ENCODE measurements at regions of chr2 and their contacts with region 1.

Region 1: GRCh38 chr2:85132834-85133637 is at the start of gene TCF7L1:
- DNase-seq: peak; percentile 87 to 91
- ATAC-seq: peak; percentile 93 to 96 (median 94)
- H3K4me3 ChIP-seq: peak within 1 kb of the TSS; percentile 85
- H3K27ac ChIP-seq: peak within 1 kb of the TSS; percentile 47
- H3K4me1 ChIP-seq: peaks cover 8% of the 10 kb centered on the region
- H3K27me3 ChIP-seq: no peaks in the 10 kb centered on the region
- CTCF ChIP-seq: peak; percentile 89
- total RNA-seq, gene TCF7L1: 5.3 to 13.3 (median 8.0) TPM

Region 2: DNA sequence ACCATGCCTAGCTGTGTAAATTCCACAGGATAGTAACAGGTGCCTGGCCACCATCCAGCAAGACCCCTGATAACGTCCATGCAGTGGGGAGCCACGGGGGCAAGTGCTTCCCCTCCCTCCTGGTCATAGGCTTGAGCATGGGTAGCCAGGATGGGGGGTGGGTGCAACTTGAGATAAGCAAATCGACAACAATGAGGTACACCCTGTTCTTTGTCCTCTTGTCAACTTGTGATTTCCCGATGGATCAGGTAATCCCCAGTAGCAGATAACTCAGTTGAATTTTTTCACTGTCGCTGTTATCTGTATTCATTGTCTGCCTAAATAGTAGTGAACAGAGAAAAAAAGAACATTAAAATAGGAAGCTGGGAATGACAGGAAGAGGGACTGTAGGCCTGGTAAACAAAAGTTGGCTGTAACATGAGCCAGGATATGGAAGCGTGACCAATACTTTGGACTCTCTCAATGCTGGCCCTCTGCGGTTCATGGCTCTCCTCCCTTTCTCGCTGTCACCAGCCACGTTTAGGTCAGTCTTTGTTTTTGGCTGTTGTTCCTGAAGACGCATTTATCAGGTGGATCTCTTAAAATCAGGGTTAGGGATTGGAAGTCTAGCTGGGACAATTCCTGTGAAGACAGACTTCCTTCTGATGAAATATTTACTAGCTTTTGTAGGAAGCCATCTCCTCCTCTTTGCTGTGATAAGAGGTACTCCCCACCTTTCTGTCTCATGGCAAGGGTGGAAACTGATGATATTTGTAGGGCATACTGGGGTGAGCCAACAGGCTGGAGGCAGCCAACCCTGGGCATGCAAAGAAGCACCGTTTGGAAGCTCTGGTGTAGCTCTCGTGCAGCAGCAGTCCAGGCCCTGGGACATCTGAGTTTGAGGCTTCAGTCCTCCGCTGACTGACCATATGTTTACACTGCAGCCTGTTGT is 42.6 kb after region 1 on chr2:
- intact Hi-C with region 1: loop called (anchors 5 kb)
- DNase-seq: peak; percentile 66 to 68
- ATAC-seq: peak; percentile 85 to 91 (median 87)
- H3K4me3 ChIP-seq: peak overlapping the region; percentile 16
- H3K27ac ChIP-seq: peak overlapping the region; percentile 96
- H3K4me1 ChIP-seq: peaks cover 51% of the 10 kb centered on the region
- H3K27me3 ChIP-seq: no peaks in the 10 kb centered on the region
- CTCF ChIP-seq: no peak

Region 3: GRCh38 chr2:85215448-85216401 is 82.7 kb after region 1 on chr2:
- intact Hi-C with region 1: loop called in 1 of 2 experiments (anchors 2 kb)
- DNase-seq: peak; percentile 39 to 58
- ATAC-seq: no peak
- H3K4me3 ChIP-seq: no peak overlapping the region
- H3K27ac ChIP-seq: peak overlapping the region; percentile 86
- H3K4me1 ChIP-seq: peaks cover 25% of the 10 kb centered on the region
- H3K27me3 ChIP-seq: no peaks in the 10 kb centered on the region
- CTCF ChIP-seq: no peak

Region 4: DNA sequence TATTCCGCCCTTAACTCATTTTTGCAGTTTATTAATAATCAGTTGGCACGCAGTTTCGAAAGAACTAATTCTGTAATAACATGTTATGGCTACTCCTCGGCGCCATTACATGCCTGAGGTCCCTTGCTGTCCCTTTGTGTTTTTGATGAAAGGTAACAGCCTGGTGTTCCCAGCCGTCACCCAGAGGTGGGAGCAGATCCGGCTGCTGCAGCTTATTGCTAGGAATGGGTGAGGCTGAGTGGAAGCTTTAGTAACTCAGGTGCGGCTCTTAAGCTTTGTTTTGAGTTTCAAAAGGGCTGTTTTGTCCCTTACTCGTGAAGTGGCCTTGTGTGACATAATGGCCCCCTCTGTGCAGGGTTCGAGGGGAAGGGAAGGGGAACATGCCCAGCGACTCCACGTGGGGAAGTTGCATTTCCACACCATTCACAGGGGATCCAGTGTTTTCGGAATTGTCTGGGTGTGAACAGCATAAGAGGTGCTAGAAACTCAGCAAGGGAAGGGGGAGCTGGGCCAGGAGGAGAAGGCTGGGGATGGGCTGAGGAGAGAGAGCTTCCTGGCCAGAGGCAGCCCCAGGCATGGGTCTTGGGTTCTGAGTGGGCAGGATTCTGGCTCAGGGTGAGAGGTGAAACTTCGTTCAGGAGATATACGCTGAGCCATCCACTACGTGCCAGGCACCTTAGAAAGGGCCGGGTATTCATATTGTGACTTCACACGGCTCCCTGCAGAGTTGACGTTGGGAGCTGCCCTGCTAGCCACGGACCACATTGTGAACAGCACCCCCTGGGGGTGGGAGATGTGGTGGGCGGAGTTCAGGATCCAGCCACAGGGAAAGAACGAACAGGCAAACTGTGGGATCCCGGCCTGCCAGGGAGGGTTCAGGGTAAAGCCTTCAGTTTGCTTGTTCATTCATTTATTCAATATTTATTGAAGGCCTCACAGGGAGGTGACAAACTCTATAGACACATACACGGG is 110.4 kb after region 1 on chr2:
- intact Hi-C with region 1: loop called (anchors 1 kb)
- DNase-seq: peak; percentile 63 to 83
- ATAC-seq: peak; percentile 78 to 92 (median 88)
- H3K4me3 ChIP-seq: no peak overlapping the region
- H3K27ac ChIP-seq: no peak overlapping the region
- H3K4me1 ChIP-seq: peaks cover 12% of the 10 kb centered on the region
- H3K27me3 ChIP-seq: no peaks in the 10 kb centered on the region
- CTCF ChIP-seq: peak; percentile 61

Region 5: GRCh38 chr2:85288244-85288725 is 155.2 kb after region 1 on chr2:
- intact Hi-C with region 1: loop called (anchors 2 to 5 kb)
- DNase-seq: peak in 1 of 2 donors; percentile 1
- ATAC-seq: no peak
- H3K4me3 ChIP-seq: no peak overlapping the region
- H3K27ac ChIP-seq: no peak overlapping the region
- H3K4me1 ChIP-seq: peaks cover 4% of the 10 kb centered on the region
- H3K27me3 ChIP-seq: no peaks in the 10 kb centered on the region
- CTCF ChIP-seq: no peak

Region 6: GRCh38 chr2:85302121-85302520 is 169.1 kb after region 1 on chr2:
- intact Hi-C with region 1: loop called in 1 of 2 experiments (anchors 1 kb)
- DNase-seq: no peak
- ATAC-seq: peak in 2 of 4 donors; percentile 11 to 40
- H3K4me3 ChIP-seq: no peak overlapping the region
- H3K27ac ChIP-seq: no peak overlapping the region
- H3K4me1 ChIP-seq: no peaks in the 10 kb centered on the region
- H3K27me3 ChIP-seq: no peaks in the 10 kb centered on the region
- CTCF ChIP-seq: no peak